ENCODE measurements at regions of chr11 and their contacts with region 1.

Region 1: GRCh38 chr11:6251120-6251733 is 8.4 kb upstream of the CCKBR start:
- DNase-seq: peak; percentile 18
- H3K4me3 ChIP-seq: no peak overlapping the region
- H3K27me3 ChIP-seq: peaks cover under 1% of the 10 kb centered on the region
- CTCF ChIP-seq: peak; percentile 96

Region 2: GRCh38 chr11:6240781-6241180 is 10.4 kb before region 1 on chr11:
- CTCF ChIA-PET with region 1: interaction called, 47 read pairs
- POLR2A ChIA-PET with region 1: no interaction called
- DNase-seq: no peak
- H3K4me3 ChIP-seq: no peak overlapping the region
- H3K27me3 ChIP-seq: peaks cover 4% of the 10 kb centered on the region; the same call in 1 of the 2 replicates
- CTCF ChIP-seq: no peak

Region 3: GRCh38 chr11:6285019-6285418 is 33.8 kb after region 1 on chr11:
- CTCF ChIA-PET with region 1: interaction called, 12 read pairs
- POLR2A ChIA-PET with region 1: no interaction called
- DNase-seq: no peak
- H3K4me3 ChIP-seq: no peak overlapping the region
- H3K27me3 ChIP-seq: peaks cover 4% of the 10 kb centered on the region; the same call in 1 of the 2 replicates
- CTCF ChIP-seq: no peak

Region 4: DNA sequence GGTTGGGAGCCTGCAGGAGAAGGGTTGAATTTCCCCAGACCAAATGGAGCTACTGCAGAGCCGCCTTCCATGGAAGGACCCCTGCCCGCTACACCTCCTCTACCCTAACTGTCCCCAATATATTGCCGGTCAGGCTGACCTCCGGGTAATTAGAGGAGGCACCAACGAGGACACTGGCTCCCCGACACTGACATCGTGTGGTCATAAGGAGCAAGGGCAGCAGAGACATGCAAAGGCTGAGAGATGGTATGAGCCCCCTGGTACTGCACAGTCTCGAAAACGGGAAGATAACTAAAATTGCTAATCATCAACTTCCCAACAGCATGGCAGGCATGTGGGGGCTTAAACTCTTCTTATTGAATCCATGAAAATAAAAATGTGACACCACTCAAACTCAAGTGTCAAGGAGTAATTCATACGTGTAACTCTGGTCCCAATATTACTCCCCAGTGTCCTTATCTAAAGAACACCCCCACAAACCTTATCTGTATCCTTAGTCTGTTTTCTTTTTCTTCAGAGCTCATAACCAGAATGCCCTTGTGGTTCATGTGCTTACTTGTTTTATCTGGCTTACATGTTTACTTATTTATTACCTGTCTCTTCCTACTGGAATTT is 64.7 kb after region 1 on chr11:
- CTCF ChIA-PET with region 1: interaction called, 59 read pairs
- POLR2A ChIA-PET with region 1: no interaction called
- DNase-seq: no peak
- H3K4me3 ChIP-seq: no peak overlapping the region
- H3K27me3 ChIP-seq: no peaks in the 10 kb centered on the region
- CTCF ChIP-seq: peak; percentile 93